GM12878 (cell line): ENCODE measurements at regions of chr2 and their contacts with region 1.

Region 1: GRCh38 chr2:136246086-136246669 is 128.2 kb upstream of the CXCR4 start:
- DNase-seq: peak; percentile 60
- ATAC-seq: peak; percentile 96
- H3K4me3 ChIP-seq: no peak overlapping the region
- H3K27ac ChIP-seq: no peak overlapping the region; the same call in 1 of the 2 replicates
- H3K4me1 ChIP-seq: peaks cover 3% of the 10 kb centered on the region; the same call in 1 of the 2 replicates
- H3K27me3 ChIP-seq: 0 out of 4 replicates have a peak, but pooled peaks cover 0 to 2% of the 10 kb centered on the region in 2 experiments
- CTCF ChIP-seq: no peak
- EP300 ChIP-seq: peak; percentile 78 to 87; a peak in 3 of 4 replicates
- POLR2A ChIP-seq: no peak
- RAD21 ChIP-seq: no peak

Region 2: GRCh38 chr2:136217996-136218395 is 28.2 kb before region 1 on chr2:
- CTCF ChIA-PET with region 1: interaction called, 8 read pairs
- POLR2A ChIA-PET with region 1: interaction called, 27 read pairs
- RAD21 ChIA-PET with region 1: interaction called, 48 read pairs
- SMC1A ChIA-PET with region 1: interaction called, 65 read pairs
- in situ Hi-C with region 1: no loop called
- intact Hi-C with region 1: no loop called
- DNase-seq: no peak
- ATAC-seq: peak; percentile 77
- H3K4me3 ChIP-seq: no peak overlapping the region
- H3K27ac ChIP-seq: no peak overlapping the region
- H3K4me1 ChIP-seq: no peaks in the 10 kb centered on the region
- H3K27me3 ChIP-seq: peaks cover 0 to 9% of the 10 kb centered on the region in 2 experiments; a peak in 1 of 4 replicates
- CTCF ChIP-seq: no peak
- EP300 ChIP-seq: peak in 1 of 2 experiments; percentile 40; a peak in 1 of 4 replicates
- POLR2A ChIP-seq: no peak
- RAD21 ChIP-seq: no peak

Region 3: DNA sequence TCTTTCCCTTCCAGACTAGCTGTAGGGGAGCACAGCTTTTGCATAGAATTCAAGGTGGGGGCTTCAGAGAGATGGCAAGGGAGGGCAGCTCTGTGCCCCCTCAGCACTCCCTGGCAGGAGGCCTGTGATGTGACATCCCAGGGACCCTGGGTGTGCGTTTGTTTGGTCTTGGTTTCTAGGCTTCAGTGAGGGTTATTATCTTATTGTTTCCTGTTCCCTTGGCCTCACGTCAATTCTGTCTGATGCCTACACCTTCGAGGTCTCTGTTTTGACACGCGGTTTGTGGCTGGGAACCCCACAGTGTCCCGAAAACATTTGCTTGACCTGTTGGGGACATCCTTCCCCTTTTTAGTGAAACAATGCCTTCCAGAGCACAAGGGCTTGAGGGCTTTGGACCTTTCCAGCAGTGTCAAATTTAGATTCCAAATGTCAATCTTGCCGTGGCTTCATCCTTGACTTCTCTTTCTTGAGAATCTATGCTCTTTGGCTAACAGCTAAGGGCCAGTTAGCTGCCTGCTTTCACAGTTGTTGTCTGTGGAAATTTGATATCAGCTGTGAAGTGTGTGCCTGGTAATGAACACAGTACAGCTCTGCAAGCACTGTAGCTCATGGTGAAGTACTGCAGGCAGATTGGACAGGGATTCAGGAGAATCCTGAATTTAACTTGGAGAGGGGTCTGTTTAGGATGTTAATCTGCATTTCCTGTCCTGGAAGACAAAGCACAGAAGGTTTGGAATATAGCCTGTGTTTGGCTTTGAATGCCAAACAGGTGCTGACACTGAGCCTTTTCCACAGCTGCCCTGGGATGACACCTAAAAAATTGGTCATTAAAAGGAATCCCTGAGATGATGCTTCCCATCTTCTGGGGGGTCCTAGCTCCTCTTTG is 20.0 kb before region 1 on chr2:
- CTCF ChIA-PET with region 1: no interaction called
- POLR2A ChIA-PET with region 1: interaction called, 5 read pairs
- RAD21 ChIA-PET with region 1: interaction called, 7 read pairs
- SMC1A ChIA-PET with region 1: interaction called, 65 read pairs
- in situ Hi-C with region 1: no loop called
- intact Hi-C with region 1: no loop called
- DNase-seq: no peak
- ATAC-seq: peak; percentile 93
- H3K4me3 ChIP-seq: no peak overlapping the region
- H3K27ac ChIP-seq: no peak overlapping the region
- H3K4me1 ChIP-seq: no peaks in the 10 kb centered on the region; the same call in 1 of the 2 replicates
- H3K27me3 ChIP-seq: no peaks in the 10 kb centered on the region
- CTCF ChIP-seq: peak in 1 of 3 experiments; percentile 7; a peak in 1 of 6 replicates
- EP300 ChIP-seq: peak; percentile 96 to 97
- POLR2A ChIP-seq: no peak
- RAD21 ChIP-seq: 0 out of 2 replicates have a peak, but pooled peaks have one; percentile 3

Region 4: DNA sequence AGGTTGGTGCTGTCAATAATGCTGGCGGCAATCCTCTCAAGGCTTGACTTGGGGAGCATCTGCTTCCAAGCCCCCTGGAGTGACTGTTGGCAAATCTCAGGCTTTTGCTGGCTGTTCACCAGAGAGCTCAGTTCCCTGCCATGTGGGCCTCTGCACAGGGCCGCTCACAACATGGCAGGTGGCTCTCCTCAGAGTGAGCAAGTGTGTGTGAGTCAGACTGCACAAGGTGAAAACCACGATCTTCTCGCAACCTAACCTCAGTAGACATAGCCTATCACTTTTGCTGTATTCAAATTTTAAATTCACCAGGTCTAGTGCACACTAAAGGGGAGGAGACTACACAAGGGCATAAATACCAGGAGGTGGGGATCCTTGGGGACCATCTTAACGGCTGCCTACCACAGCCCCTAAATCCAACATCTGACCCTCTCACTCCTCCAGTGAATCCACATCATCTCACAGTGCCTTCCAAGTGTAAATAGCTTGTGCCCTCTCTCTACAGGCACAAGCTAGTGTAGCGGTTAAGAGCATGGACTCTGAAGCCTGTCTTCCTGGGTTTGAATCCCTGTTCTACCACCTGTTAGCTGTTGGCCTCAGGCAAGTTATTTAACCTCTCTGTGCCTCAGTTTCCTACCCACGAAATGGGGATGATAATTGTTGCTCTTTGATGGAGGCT is 59.5 kb after region 1 on chr2:
- CTCF ChIA-PET with region 1: interaction called, 3 read pairs
- POLR2A ChIA-PET with region 1: interaction called, 4 read pairs
- RAD21 ChIA-PET with region 1: interaction called, 25 read pairs
- SMC1A ChIA-PET with region 1: interaction called, 7 read pairs
- in situ Hi-C with region 1: no loop called
- intact Hi-C with region 1: no loop called
- DNase-seq: no peak
- ATAC-seq: peak; percentile 93
- H3K4me3 ChIP-seq: no peak overlapping the region
- H3K27ac ChIP-seq: no peak overlapping the region
- H3K4me1 ChIP-seq: peaks cover 6% of the 10 kb centered on the region
- H3K27me3 ChIP-seq: peaks cover 0 to 5% of the 10 kb centered on the region in 2 experiments; a peak in 1 of 4 replicates
- CTCF ChIP-seq: no peak
- EP300 ChIP-seq: peak; percentile 62 to 64; a peak in 1 of 4 replicates
- POLR2A ChIP-seq: no peak
- RAD21 ChIP-seq: no peak

Region 5: GRCh38 chr2:136434251-136434715 is 188.1 kb after region 1 on chr2:
- CTCF ChIA-PET with region 1: no interaction called
- POLR2A ChIA-PET with region 1: no interaction called
- RAD21 ChIA-PET with region 1: no interaction called
- SMC1A ChIA-PET with region 1: no interaction called
- in situ Hi-C with region 1: no loop called
- intact Hi-C with region 1: no loop called
- DNase-seq: no peak
- ATAC-seq: no peak
- H3K4me3 ChIP-seq: no peak overlapping the region
- H3K27ac ChIP-seq: no peak overlapping the region
- H3K4me1 ChIP-seq: no peaks in the 10 kb centered on the region
- H3K27me3 ChIP-seq: no peaks in the 10 kb centered on the region
- CTCF ChIP-seq: no peak
- EP300 ChIP-seq: no peak
- POLR2A ChIP-seq: no peak
- RAD21 ChIP-seq: no peak